HepG2 (cell line): ENCODE measurements at regions of chr7 and their contacts with region 1.

Region 1: GRCh38 chr7:30740424-30741181 is 11.3 kb upstream of the INMT start:
- DNase-seq: peak; percentile 29
- ATAC-seq: peak; percentile 91
- H3K4me3 ChIP-seq: no peak overlapping the region
- H3K27ac ChIP-seq: no peak overlapping the region
- H3K4me1 ChIP-seq: no peaks in the 10 kb centered on the region
- H3K27me3 ChIP-seq: peaks cover 0 to 21% of the 10 kb centered on the region in 2 experiments; a peak in 2 of 5 replicates
- CTCF ChIP-seq: peak; percentile 97
- EP300 ChIP-seq: no peak
- POLR2A ChIP-seq: no peak
- RAD21 ChIP-seq: peak; percentile 86

Region 2: DNA sequence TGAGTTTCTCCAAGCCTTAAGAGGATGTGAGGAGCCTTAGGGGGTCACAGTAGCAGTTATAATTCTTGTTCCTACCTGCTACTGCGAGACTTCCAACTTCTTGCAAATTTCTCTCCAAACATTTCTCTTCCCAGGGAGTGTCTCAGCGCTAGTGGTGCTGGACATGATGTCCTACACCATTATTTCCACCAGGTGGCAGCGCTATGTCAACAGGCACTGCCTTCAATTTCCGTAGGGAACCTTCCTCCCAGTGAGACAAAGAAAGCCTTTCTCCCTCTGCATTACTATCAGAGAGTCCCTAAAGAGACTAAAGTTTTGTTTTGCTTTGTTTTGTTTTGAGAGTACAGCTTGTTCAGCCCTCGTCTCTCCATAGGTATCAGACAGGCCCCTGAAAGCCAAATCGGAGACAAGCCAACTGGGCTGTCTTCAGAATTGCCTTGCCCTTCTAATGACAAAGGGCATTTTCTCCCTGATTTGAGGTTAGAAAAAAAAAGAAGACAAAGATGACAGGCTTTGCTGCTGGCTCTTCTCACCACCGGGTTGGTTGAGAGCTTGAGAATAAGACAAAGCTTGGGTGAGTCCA is 191.8 kb before region 1 on chr7:
- CTCF ChIA-PET with region 1: interaction called, 4 read pairs
- POLR2A ChIA-PET with region 1: no interaction called
- in situ Hi-C with region 1: no loop called
- intact Hi-C with region 1: loop called (anchors 10 kb)
- DNase-seq: peak; percentile 78
- ATAC-seq: peak; percentile 98
- H3K4me3 ChIP-seq: no peak overlapping the region
- H3K27ac ChIP-seq: no peak overlapping the region
- H3K4me1 ChIP-seq: peaks cover 29% of the 10 kb centered on the region
- H3K27me3 ChIP-seq: no peaks in the 10 kb centered on the region
- CTCF ChIP-seq: peak; percentile 88
- EP300 ChIP-seq: no peak
- POLR2A ChIP-seq: no peak
- RAD21 ChIP-seq: peak; percentile 67

Region 3: DNA sequence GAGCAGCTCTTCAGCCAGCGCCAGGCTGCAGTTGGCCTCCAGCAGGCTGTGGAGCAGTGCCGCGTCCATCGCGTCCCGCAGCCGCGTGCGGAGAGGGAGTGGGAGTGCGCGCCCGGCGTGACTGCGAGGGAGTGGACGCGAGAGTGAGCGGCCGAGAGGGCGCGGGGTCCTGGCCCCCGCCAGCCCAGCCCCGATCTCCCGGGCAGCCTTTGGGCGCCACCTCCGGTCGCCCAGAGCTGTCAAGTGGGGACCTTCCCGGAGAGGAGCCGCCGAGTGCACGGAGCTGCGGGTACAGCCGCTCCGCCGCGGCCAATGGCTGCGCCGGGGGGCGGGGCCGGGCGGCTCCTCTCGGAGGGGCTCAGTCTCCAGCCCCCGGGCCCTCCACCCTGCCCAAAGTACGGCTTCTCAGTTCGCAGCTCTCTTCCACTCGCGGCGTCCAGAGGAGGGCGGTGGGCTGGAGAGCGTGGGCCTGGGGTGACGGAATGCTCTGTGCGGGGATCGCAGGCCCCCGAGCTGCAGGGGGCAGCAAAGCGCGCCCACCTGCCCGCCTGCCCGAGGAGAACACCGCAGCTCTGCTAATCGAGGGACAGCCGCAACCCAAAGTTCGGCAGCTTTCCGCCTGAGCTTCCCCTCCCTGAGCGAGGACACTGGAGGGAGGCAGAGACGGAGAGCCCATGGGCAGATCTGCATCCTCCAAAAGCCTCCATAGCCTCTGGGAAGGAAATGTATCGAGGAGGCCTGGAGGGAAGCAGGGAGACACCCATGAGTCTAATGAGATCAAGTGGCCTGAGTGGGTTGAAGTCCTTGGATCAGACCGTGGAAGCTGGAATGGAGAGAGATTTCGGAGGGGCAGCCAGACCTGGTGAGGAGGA is 58.2 kb before region 1 on chr7 and contains the start of gene CRHR2:
- CTCF ChIA-PET with region 1: interaction called, 3 read pairs
- POLR2A ChIA-PET with region 1: no interaction called
- in situ Hi-C with region 1: no loop called
- intact Hi-C with region 1: loop called (anchors 1 kb)
- DNase-seq: no peak
- ATAC-seq: peak; percentile 81
- H3K4me3 ChIP-seq: peak within 1 kb of the TSS in 2 of 3 experiments; percentile 31 to 54; a peak in 3 of 6 replicates
- H3K27ac ChIP-seq: no peak within 1 kb of the TSS
- H3K4me1 ChIP-seq: no peaks in the 10 kb centered on the region
- H3K27me3 ChIP-seq: peaks cover 4 to 41% of the 10 kb centered on the region in 2 experiments; a peak in 4 of 5 replicates
- CTCF ChIP-seq: peak; percentile 68
- EP300 ChIP-seq: no peak
- POLR2A ChIP-seq: no peak
- RAD21 ChIP-seq: peak; percentile 22; the same call in 1 of the 2 replicates
- total RNA-seq, gene CRHR2: not detected in 2 replicates